Spleen (tissue), 13 donors: ENCODE measurements at regions of chr10 and their contacts with region 1.

Region 1: GRCh38 chr10:119207367-119207668 is at the start of gene GRK5:
- DNase-seq: peak; percentile 99
- H3K4me3 ChIP-seq: peak within 1 kb of the TSS; percentile 59 to 96 (median 86)
- H3K27ac ChIP-seq: peak within 1 kb of the TSS; percentile 91 to 99 (median 97)
- H3K4me1 ChIP-seq: peaks cover 17 to 72% (median 53%) of the 10 kb centered on the region in 6 donors
- H3K27me3 ChIP-seq: no peaks in the 10 kb centered on the region
- CTCF ChIP-seq: no peak
- POLR2A ChIP-seq: peak in 2 of 3 donors; percentile 46 to 66
- total RNA-seq, gene GRK5: 47.2 to 85.2 (median 59.7) TPM

Region 2: GRCh38 chr10:119268871-119269506 is 61.7 kb after region 1 on chr10:
- intact Hi-C with region 1: loop called (anchors 10 kb)
- DNase-seq: peak; percentile 75
- H3K4me3 ChIP-seq: no peak overlapping the region
- H3K27ac ChIP-seq: peak overlapping the region; percentile 59 to 93 (median 84)
- H3K4me1 ChIP-seq: peaks cover 38 to 97% (median 75%) of the 10 kb centered on the region in 6 donors
- H3K27me3 ChIP-seq: no peaks in the 10 kb centered on the region
- CTCF ChIP-seq: no peak
- POLR2A ChIP-seq: no peak

Region 3: DNA sequence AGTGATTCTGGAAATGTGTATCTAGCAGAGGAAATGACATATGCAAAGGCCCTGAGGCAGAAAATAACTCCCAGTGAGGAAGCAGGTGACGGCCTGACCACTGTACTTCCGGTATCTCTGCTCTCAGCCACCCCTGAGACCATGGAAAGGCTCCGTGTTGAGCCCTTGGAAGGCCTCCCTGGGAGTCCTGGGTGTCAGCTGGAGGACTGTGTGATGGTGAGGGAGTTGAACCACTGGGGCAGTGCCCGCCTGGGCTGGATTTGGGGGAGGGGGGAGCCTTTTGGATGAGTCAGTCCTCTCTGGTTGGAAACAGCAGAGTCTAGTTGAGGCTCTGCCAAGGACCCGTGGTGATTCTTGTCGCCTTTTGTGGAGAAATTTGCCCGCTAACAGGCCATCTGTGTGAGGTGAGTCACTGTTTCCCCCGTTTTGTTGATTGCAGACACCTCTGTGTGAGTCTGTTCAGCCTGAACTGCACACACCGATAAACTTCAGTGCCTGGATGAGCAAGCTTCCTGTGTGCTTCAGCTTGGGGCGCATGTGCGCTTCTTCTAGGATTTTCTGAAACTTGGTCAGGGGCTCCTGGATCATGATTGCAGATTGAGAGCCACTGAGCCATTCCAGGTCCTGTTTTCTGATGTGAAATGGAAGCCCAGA is 98.7 kb after region 1 on chr10:
- intact Hi-C with region 1: loop called (anchors 5 kb)
- DNase-seq: peak; percentile 86
- H3K4me3 ChIP-seq: peak overlapping the region; percentile 2 to 64 (median 22)
- H3K27ac ChIP-seq: peak overlapping the region; percentile 82 to 94 (median 86)
- H3K4me1 ChIP-seq: peaks cover 50 to 100% (median 98%) of the 10 kb centered on the region in 6 donors
- H3K27me3 ChIP-seq: no peaks in the 10 kb centered on the region
- CTCF ChIP-seq: no peak
- POLR2A ChIP-seq: no peak

Region 4: DNA sequence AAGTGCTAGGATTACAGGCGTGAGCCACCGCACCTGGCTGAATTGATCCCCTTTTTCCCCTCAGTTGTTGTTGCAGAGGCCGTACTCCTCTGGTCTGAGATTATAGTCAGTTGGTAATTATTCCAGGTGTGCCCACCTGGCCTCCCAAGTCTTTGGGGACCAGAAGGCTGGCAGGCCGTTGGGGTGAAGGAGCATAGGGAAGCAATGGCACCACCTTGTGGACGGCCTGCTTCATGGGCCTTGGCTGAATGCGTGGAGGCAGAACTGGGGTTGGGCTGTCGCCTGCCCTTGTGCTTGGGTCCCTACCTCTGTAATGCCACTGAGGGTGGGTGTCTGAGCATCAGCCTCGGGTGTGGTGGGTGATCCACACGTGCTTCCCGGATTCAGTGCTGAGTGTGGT is 209.5 kb after region 1 on chr10:
- intact Hi-C with region 1: loop called (anchors 5 kb)
- DNase-seq: peak; percentile 92
- H3K4me3 ChIP-seq: no peak overlapping the region
- H3K27ac ChIP-seq: peak overlapping the region in 4 of 8 donors; percentile 28 to 71 (median 38)
- H3K4me1 ChIP-seq: peaks cover 15 to 69% (median 36%) of the 10 kb centered on the region in 6 donors
- H3K27me3 ChIP-seq: no peaks in the 10 kb centered on the region
- CTCF ChIP-seq: peak; percentile 72 to 92 (median 84)
- POLR2A ChIP-seq: no peak

Region 5: GRCh38 chr10:119445311-119445934 is 238.1 kb after region 1 on chr10:
- intact Hi-C with region 1: loop called (anchors 5 kb)
- DNase-seq: peak; percentile 95
- H3K4me3 ChIP-seq: no peak overlapping the region
- H3K27ac ChIP-seq: peak overlapping the region in 2 of 8 donors; percentile 17 to 32
- H3K4me1 ChIP-seq: peaks cover 0 to 41% (median 10%) of the 10 kb centered on the region in 6 donors
- H3K27me3 ChIP-seq: no peaks in the 10 kb centered on the region
- CTCF ChIP-seq: peak; percentile 80 to 97 (median 93)
- POLR2A ChIP-seq: no peak